ENCODE measurements at regions of chr11 and their contacts with region 1.

Region 1: DNA sequence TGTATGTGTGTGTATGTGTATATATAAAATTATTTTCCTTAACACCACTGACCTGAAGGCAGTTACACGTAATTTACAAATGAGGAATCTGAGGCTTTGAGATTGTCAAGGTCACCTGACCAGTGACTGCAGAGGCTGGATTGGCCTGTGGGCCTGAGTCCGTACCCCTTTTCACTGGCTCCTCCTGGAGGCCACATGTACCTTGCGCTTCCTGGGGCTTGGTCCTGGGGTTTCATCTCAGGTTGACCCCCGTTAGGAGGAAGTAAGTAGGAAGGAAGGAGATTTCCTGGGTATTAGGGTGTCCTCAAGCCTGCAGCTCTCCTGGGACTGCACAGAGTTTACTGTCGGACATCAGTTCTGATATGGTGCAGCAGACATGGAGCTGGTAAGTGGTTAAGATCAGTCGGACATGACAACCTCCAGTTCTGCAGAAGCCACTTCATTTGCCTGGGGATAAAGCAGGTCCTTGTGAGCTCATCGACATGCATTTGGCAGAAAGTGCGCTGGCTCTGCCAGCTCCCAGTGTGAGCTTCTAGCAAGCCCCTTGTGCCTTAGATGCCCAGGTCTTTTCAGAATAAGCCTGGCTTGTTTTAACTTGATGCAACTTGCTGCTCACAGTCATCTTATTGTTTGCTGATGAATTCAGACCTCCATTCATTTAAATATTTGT is 36.6 kb downstream of the ST3GAL4 start:
- DNase-seq: peak in 6 of 10 donors; percentile 36 to 60 (median 54)
- H3K4me3 ChIP-seq: peak overlapping the region in 2 of 59 donors; percentile 2 to 8
- H3K27ac ChIP-seq: peak overlapping the region in 49 of 59 donors; percentile 2 to 94 (median 67)
- H3K27me3 ChIP-seq: no peaks in the 10 kb centered on the region
- CTCF ChIP-seq: peak in 24 of 56 donors; percentile 9 to 51 (median 26)

Region 2: DNA sequence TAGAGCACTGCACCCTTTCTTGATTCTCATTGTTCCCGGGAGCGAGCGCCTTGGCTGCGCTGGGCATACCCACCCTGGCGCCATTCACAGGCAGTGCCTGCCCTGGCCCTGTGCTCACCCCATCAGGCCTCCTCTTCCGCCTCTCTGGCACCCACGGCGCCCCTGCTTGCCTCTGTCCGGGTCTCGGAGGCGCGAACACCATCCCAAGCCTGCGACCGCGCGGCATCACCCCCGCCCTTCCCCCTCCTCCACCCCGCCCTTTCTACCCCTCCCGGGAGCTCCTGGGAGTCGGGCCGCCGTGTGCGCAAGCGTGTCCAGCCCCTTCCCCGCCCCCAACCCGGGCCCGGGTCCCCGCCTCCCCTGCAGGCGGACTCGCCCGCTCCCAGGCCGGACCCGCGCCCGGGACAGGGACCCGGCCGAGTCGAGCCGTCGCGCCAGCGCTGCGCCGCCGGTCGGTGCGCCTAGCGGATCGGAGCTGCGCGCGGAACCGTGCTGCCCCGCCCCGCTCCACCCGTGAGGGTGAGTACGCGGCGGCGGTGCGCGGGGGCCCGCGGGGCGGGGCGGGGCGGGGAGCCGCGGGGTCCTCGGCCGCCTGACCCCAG is 36.7 kb before region 1 on chr11 and contains the start of gene ST3GAL4:
- intact Hi-C with region 1: loop called in 1 of 2 experiments (anchors 5 kb)
- DNase-seq: peak; percentile 68 to 86 (median 76)
- H3K4me3 ChIP-seq: peak within 1 kb of the TSS; percentile 60 to 97 (median 78)
- H3K27ac ChIP-seq: peak within 1 kb of the TSS; percentile 63 to 98 (median 91)
- H3K27me3 ChIP-seq: no peaks in the 10 kb centered on the region
- CTCF ChIP-seq: peak in 8 of 56 donors; percentile 10 to 29 (median 20)
- total RNA-seq, gene ST3GAL4: 19.8 to 70.4 (median 32.7) TPM

Region 3: DNA sequence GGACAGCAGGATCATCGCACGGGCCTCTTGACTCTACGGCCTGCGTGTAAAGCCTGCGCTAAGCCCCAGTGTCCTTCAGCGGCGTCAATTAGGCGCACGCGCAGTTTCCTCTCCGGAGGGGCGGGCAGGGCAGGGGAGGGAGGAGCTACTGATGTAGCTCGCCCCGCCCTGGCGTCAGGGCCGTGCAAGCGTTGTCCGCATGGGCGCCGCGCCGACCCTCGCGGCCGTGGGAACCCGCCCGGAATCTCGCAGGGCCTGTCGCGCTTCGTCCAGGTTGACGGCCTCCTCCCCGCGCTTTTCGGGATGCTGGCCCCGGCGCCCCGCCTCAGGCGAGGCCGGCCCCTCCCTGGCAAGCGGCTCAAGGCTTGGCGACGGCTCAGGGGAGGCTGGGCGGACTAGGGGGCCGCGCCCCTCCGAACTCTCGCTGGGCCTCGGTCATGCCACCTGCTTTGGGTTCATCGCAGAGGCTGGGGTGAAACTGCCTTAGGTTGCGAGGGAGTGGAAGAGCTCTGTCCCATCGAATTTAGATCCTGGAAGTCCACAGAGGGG is 24.5 kb after region 1 on chr11:
- intact Hi-C with region 1: loop called in 1 of 2 experiments (anchors 2 kb)
- DNase-seq: peak; percentile 87 to 91 (median 90)
- H3K4me3 ChIP-seq: peak overlapping the region; percentile 33 to 73 (median 60)
- H3K27ac ChIP-seq: peak overlapping the region; percentile 55 to 95 (median 89)
- H3K27me3 ChIP-seq: no peaks in the 10 kb centered on the region
- CTCF ChIP-seq: peak in 21 of 56 donors; percentile 4 to 45 (median 21)

Region 4: DNA sequence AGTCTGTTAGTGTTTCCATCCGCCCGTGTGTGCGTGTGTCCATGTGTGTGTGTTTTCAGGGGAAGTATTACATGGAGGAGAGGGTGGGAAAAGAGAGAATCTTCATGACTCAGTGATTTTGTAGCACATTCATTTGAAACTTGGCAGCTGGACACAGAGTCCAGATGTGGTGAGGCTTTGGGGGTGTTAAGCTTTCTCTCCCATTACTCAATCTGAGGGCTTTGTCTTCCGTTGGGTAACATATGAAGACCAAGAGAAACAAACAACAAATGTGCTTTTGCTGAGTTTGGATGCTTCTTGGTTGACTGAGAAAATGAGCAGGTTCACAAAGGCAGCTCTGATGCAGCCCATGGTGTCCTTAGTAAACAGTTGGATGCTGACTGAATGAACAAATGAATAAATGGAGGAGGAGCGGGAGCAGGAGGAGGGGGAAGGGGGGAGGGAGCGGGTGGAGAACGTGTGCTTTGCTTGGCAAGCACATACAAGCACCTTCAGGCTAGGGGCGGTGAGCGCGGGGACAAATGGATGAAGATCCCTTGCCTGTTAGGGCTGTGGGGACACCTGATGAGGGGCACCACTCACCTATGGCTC is 67.7 kb after region 1 on chr11:
- intact Hi-C with region 1: loop called in 1 of 2 experiments (anchors 10 kb)
- DNase-seq: peak in 1 of 10 donors; percentile 54
- H3K4me3 ChIP-seq: peak overlapping the region in 1 of 59 donors; percentile 13
- H3K27ac ChIP-seq: peak overlapping the region in 54 of 59 donors; percentile 9 to 86 (median 68)
- H3K27me3 ChIP-seq: no peaks in the 10 kb centered on the region
- CTCF ChIP-seq: no peak